ENCODE measurements at regions of chr4 and their contacts with region 1.

Region 1: DNA sequence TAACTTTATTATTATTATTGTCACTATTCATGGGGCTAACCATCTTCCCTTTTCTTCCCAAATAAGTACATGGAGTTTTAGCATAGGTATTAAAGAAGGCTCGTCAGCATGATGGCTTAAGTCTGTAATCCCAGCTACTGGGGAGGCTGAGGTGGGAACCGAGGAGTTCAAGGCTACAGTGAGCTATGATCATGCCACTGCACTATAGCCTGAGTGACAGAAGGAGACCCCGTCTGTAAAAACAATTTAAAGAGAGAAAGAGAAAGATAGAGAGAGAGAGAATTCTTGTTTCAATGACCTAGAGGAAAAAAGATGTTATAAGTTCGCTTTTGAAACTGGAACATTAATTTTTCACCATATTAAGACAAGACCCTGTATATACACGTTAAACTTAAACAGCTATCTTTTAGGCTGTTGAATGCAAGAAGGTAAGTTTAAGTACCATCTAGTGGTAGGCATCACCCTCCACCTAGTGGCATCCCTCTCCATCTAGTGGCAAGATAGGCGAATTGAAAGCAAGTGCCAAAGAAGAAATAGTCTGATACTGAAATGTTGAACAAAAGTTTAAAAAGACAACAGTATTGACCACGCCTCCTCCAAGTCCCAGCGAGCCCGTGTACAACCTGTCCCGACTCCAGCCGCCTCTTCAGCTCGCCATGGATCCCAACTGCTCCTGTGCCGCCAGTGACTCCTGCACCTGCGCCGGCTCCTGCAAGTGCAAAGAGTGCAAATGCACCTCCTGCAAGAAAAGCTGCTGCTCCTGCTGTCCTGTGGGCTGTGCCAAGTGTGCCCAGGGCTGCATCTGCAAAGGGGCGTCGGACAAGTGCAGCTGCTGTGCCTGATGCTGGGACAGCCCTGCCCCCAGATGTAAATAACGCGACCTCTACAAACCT is 26.0 kb upstream of the YTHDC1 start:
- DNase-seq: peak; percentile 64 to 68 (median 65)
- H3K4me3 ChIP-seq: peak overlapping the region in 1 of 2 donors; percentile 44
- H3K4me3 Mint-ChIP-seq: peak overlapping the region; percentile 66 to 96 (median 82)
- H3K27ac ChIP-seq: no peak overlapping the region
- H3K27ac Mint-ChIP-seq: peak overlapping the region in 5 of 7 donors; percentile 4 to 42 (median 5)
- H3K4me1 ChIP-seq: peaks cover 7% of the 10 kb centered on the region
- H3K4me1 Mint-ChIP-seq: peaks cover 13 to 16% (median 15%) of the 10 kb centered on the region in 4 donors
- H3K27me3 ChIP-seq: no peaks in the 10 kb centered on the region
- H3K27me3 Mint-ChIP-seq: peaks cover 0 to 3% of the 10 kb centered on the region in 2 donors

Region 2: DNA sequence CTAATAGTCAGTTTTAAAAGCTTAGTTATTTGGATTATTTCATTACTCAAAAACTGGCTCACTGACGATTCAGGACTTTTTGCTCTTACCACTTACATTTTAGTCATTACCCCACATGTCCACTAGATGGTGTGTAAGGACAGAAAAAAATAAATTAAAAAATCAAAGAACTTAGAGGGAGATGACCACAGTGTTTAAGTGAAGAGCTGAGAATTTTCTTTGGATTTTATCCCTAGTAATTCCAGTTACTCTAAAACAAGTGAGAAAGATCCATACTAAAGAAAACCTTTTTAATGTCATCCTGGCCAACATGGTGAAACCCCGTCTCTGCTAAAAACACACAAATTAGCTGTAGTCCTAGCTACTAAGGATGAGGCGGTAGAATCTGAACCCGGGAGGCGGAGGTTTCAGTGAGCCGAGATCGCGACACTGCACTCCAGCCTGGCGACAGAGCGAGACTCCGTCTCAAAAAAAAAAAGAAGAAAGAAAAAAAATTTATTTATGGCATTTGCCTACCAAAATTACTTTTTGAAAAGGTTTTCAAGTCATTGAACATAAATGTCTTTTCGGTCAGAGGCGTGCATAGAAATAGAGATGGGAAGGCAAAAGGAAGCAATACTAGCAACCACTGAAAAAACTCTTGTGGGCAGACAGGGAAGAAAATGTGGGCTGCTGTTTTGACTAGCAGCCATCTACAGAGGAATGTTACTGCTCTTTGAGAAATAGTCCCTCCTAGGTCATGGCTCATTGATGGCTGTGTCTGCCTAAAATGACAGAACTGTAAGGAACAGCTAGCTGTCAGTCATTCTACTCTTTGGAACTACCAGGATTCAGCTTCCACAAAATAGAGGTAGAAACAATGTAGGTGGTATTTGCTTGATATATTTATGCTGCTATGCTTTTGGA is 103.8 kb before region 1 on chr4:
- CTCF ChIA-PET with region 1: interaction called, 115 read pairs
- POLR2A ChIA-PET with region 1: interaction called, 4 read pairs
- intact Hi-C with region 1: loop called (anchors 1 kb)
- DNase-seq: peak in 4 of 5 donors; percentile 39 to 42 (median 41)
- H3K4me3 ChIP-seq: no peak overlapping the region
- H3K4me3 Mint-ChIP-seq: peak overlapping the region in 4 of 8 donors; percentile 16 to 63 (median 50)
- H3K27ac ChIP-seq: no peak overlapping the region
- H3K27ac Mint-ChIP-seq: no peak overlapping the region
- H3K4me1 ChIP-seq: no peaks in the 10 kb centered on the region
- H3K4me1 Mint-ChIP-seq: peaks cover 0 to 4% (median 1%) of the 10 kb centered on the region in 4 donors
- H3K27me3 ChIP-seq: no peaks in the 10 kb centered on the region
- H3K27me3 Mint-ChIP-seq: peaks cover 7 to 8% of the 10 kb centered on the region in 2 donors

Region 3: DNA sequence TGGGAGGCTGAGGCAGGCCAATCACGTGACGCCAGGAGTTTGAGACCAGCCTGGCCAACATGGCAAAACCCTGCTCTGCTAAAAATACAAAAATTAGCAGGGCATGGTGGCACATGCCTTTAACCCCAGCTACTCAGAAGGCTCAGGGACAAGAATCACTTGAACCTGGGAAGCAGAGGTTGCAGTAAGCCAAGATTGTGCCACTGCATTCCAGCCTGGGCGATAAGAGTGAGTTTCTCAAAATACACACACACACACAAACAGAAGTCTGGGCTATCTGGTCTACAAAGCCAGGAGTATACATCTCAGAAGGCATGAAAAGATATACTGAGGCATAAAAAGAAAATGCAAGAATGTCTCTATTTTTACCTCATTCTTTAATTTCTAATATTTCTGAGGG is 37.3 kb before region 1 on chr4:
- CTCF ChIA-PET with region 1: interaction called, 16 read pairs
- POLR2A ChIA-PET with region 1: no interaction called
- intact Hi-C with region 1: loop called (anchors 5 kb)
- DNase-seq: no peak
- H3K4me3 ChIP-seq: no peak overlapping the region
- H3K4me3 Mint-ChIP-seq: no peak overlapping the region
- H3K27ac ChIP-seq: no peak overlapping the region
- H3K27ac Mint-ChIP-seq: peak overlapping the region in 2 of 7 donors; percentile 55 to 72
- H3K4me1 ChIP-seq: peaks cover 53% of the 10 kb centered on the region
- H3K4me1 Mint-ChIP-seq: peaks cover 32 to 67% (median 46%) of the 10 kb centered on the region in 4 donors
- H3K27me3 ChIP-seq: no peaks in the 10 kb centered on the region
- H3K27me3 Mint-ChIP-seq: no peaks in the 10 kb centered on the region

Region 4: DNA sequence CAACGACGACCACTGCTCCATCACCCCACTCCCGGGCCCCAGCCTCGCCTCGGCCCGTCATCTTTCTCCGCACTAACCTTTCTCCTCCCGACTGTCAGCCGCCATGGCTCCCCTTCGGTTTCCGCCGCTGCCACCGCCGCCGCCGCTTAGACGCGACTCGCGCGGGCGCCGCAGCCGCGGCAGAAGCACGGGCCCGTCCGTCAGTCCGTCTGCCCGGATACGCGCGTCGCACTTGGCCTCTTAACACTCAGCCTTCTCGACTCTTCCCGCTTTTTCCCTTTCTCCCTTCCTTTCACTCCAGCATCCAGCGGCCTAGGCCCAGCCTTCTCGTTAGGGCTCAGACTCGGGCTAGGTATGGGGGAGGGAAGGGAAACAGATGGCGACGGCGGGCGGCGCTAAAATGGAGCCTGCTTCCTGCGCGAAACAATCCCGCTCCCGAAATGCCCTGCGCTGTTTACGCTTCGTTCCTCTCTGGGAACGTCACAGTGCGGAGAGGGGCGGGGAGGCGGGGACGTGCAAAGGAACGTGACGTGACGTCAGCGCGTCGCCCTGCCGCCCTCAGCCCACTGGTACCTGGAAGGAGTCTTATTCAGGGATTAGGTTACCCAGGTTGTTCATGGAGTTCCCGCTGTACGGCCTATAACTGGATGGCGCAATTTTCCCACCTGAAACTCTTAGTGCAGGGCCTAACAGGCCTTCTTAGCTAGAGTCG is 26.1 kb before region 1 on chr4 and contains the start of gene YTHDC1:
- CTCF ChIA-PET with region 1: interaction called, 23 read pairs
- POLR2A ChIA-PET with region 1: interaction called, 5 read pairs
- intact Hi-C with region 1: loop called (anchors 1 kb)
- DNase-seq: peak; percentile 93 to 97 (median 94)
- H3K4me3 ChIP-seq: peak within 1 kb of the TSS; percentile 79 to 89
- H3K4me3 Mint-ChIP-seq: peak within 1 kb of the TSS; percentile 96 to 100 (median 98)
- H3K27ac ChIP-seq: peak within 1 kb of the TSS; percentile 96
- H3K27ac Mint-ChIP-seq: peak within 1 kb of the TSS; percentile 99 to 100 (median 100)
- H3K4me1 ChIP-seq: peaks cover 47% of the 10 kb centered on the region
- H3K4me1 Mint-ChIP-seq: peaks cover 28 to 52% (median 36%) of the 10 kb centered on the region in 4 donors
- H3K27me3 ChIP-seq: no peaks in the 10 kb centered on the region
- H3K27me3 Mint-ChIP-seq: peaks cover 0 to 2% of the 10 kb centered on the region in 2 donors
- total RNA-seq, gene YTHDC1: 187 to 201 TPM

Region 5: DNA sequence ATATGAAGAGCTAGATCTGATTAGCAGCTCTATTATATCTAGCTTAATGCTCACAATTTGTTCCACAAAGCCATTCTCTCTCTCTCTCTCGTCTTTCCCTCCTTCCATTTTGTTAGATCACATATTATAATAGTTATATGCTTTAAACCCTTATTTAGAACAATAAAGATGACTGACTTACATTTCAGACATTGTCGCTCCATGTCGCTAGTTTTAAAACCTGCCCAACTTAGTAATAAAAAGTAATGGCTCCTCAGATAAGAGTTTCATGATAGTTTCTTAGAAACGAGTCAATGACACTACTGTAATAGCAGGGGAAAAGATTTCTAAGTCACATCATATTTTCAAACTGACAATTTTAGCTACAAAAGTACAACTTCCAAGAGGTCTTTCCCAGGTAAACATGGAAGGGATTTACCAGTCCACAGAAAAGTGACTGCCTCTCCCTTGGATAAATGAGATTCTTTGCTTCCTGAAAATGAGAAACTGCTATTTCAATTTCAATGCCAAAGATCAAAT is 12.5 kb after region 1 on chr4:
- CTCF ChIA-PET with region 1: interaction called, 10 read pairs
- POLR2A ChIA-PET with region 1: no interaction called
- intact Hi-C with region 1: no loop called
- DNase-seq: no peak
- H3K4me3 ChIP-seq: no peak overlapping the region
- H3K4me3 Mint-ChIP-seq: no peak overlapping the region
- H3K27ac ChIP-seq: no peak overlapping the region
- H3K27ac Mint-ChIP-seq: no peak overlapping the region
- H3K4me1 ChIP-seq: no peaks in the 10 kb centered on the region
- H3K4me1 Mint-ChIP-seq: no peaks in the 10 kb centered on the region
- H3K27me3 ChIP-seq: no peaks in the 10 kb centered on the region
- H3K27me3 Mint-ChIP-seq: peaks cover 3 to 12% of the 10 kb centered on the region in 2 donors

Region 6: GRCh38 chr4:68518889-68519288 is 143.0 kb after region 1 on chr4:
- CTCF ChIA-PET with region 1: no interaction called
- POLR2A ChIA-PET with region 1: no interaction called
- intact Hi-C with region 1: no loop called
- DNase-seq: no peak
- H3K4me3 ChIP-seq: no peak overlapping the region
- H3K4me3 Mint-ChIP-seq: no peak overlapping the region
- H3K27ac ChIP-seq: no peak overlapping the region
- H3K27ac Mint-ChIP-seq: no peak overlapping the region
- H3K4me1 ChIP-seq: no peaks in the 10 kb centered on the region
- H3K4me1 Mint-ChIP-seq: no peaks in the 10 kb centered on the region
- H3K27me3 ChIP-seq: no peaks in the 10 kb centered on the region
- H3K27me3 Mint-ChIP-seq: no peaks in the 10 kb centered on the region

Region 7: DNA sequence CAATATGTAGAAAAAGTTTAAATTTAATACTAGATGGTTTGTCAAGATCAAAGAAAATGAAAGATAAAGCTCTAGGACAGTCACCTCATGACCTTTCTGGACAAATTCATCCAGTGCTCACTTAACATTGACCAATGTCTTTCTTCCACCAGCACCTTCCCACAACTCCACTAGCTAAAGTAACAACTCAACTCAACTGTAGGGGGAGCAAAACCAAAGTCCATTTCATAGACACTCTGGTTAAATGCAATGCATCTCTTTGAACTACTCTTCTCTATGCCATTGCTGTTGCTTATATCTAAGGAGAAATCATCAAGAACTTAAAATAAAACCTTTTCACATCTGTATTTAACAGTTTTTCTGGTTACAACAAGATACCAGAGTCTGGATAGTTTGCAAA is 1094.6 kb after region 1 on chr4:
- CTCF ChIA-PET with region 1: no interaction called
- POLR2A ChIA-PET with region 1: no interaction called
- intact Hi-C with region 1: no loop called
- DNase-seq: no peak
- H3K4me3 ChIP-seq: no peak overlapping the region
- H3K4me3 Mint-ChIP-seq: no peak overlapping the region
- H3K27ac ChIP-seq: no peak overlapping the region
- H3K27ac Mint-ChIP-seq: no peak overlapping the region
- H3K4me1 ChIP-seq: no peaks in the 10 kb centered on the region
- H3K4me1 Mint-ChIP-seq: no peaks in the 10 kb centered on the region
- H3K27me3 ChIP-seq: no peaks in the 10 kb centered on the region
- H3K27me3 Mint-ChIP-seq: no peaks in the 10 kb centered on the region